AG04449 (cell line): ENCODE measurements at regions of chr14 and their contacts with region 1.

Region 1: GRCh38 chr14:105517096-105517495 is 9.3 kb upstream of the TMEM121 start:
- DNase-seq: no peak
- H3K4me3 ChIP-seq: no peak overlapping the region
- CTCF ChIP-seq: no peak

Region 2: DNA sequence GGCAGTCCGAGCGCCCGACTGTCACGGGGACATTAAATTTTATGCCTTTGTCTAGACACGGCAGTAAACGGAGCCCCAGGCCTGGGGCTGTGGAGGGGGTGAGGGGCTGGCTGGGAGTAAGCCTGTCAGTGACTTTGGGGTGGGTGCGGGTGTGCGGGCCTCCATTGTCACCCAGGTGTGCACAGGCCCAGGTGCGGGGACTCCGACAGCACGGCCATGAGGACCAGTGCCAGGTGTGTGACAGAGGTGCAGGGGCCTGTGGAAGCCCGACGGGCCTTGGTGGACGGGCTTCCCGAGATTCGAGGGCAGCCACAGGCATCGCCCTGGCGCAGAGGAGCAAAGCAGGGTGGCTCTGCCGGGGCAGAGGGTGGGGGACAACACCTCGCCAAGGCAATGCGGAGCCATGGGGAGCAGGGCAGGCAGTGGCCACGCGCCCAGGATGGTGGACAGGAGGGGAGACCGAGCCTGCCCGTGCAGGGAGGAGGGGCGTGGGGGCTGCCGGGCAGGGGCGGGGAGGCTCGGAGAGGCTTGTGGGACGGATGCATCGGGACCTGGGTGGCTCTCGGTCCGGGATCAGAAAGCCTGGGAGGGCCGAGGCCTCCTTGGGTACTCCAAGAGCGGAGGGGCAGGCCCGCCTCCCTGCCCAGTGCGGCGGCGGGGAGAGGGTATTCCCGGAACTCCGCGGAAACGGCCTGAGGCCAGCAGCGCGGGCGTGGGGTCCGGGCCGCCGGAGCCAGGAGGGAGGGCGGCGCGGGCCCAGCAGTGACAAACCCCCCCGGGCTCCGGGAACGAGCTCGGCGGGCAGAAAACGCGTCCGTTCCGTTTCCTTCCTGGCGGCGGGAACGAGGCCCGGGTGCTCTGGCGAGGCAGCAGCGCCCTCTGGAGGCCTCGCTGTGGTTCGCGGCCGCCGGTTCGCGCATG is 10.8 kb after region 1 on chr14:
- CTCF ChIA-PET with region 1: interaction called, 14 read pairs
- POLR2A ChIA-PET with region 1: no interaction called
- DNase-seq: no peak
- H3K4me3 ChIP-seq: peak overlapping the region; percentile 63
- CTCF ChIP-seq: peak; percentile 95

Region 3: DNA sequence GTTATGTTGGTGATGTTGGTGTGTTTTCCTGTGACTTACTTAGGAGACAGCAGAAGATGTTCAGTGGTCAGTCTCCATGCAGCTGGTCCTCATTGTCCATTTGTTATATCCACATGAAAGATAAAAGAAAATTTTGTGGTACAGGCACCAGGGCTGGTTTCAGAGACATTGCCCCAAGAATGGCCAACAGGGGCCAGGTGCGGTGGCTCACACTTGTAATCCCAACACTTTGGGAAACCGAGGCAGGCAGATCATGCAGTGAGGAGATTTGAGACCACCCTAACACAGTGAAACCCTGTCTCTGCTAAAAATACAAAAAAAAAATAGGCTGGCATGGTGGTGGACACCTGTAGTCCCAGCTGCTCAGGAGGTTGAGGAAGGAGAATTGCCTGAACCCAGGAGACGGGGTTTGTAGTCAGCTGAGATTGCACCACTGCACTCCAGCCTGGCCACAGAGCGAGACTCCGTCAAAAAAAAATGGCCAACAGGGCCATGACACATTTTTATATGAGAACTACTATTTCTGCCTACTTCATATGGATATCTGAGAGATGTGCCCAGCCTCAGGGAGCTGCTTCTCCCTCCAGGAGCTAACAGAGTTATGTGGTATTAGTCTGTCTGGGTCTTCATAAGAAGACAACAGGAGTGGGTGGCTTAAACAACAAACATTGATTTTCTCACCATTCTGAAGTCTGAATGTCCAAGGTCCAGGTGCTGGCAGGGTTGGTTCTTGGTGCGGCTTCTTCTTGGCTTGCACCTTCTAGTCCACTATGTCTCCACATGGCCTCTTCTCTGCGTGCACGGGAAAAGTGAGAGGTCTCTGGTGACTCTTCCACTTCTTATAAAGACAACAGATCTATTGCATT is 831.0 kb after region 1 on chr14:
- CTCF ChIA-PET with region 1: no interaction called
- POLR2A ChIA-PET with region 1: no interaction called
- DNase-seq: no peak
- H3K4me3 ChIP-seq: no peak overlapping the region
- CTCF ChIP-seq: no peak